Right ventricle myocardium superior (tissue), 1 donor: ENCODE measurements at regions of chr13 and their contacts with region 1.

Region 1: DNA sequence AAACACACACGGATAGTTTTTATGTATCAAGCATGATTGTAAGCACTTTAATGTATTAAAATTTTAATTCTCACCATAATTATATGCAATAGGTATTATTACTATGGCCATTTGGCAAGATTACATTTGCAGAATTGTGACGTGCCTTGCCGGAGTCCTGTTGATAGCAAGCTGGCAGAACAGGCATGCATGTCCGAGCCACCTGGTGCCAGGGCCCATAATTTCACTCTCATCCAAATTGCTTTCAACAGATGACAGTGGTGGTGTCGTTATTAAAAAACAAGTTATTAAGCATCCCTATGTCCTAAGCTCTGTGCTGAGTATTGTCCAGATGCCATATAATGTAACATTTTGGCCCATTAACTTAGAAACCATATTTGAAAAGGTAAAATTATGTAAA is 374.3 kb downstream of the FOXO1 start:
- DNase-seq: peak; percentile 59
- ATAC-seq: peak; percentile 92

Region 2: GRCh38 chr13:39347926-39348901 is 943.9 kb before region 1 on chr13:
- intact Hi-C with region 1: no loop called
- DNase-seq: peak; percentile 77
- ATAC-seq: peak; percentile 90

Region 3: GRCh38 chr13:40172149-40172591 is 119.9 kb before region 1 on chr13:
- intact Hi-C with region 1: loop called (anchors 10 kb)
- DNase-seq: no peak
- ATAC-seq: peak; percentile 6

Region 4: GRCh38 chr13:40259899-40260298 is 32.2 kb before region 1 on chr13:
- intact Hi-C with region 1: no loop called
- DNase-seq: no peak
- ATAC-seq: peak; percentile 89